RWPE1 (cell line): ENCODE measurements at regions of chr14 and their contacts with region 1.

Region 1: GRCh38 chr14:55910601-55911243 is 207.5 kb upstream of the PELI2 start:
- DNase-seq: no peak
- H3K27ac ChIP-seq: no peak overlapping the region
- CTCF ChIP-seq: no peak

Region 2: GRCh38 chr14:55762595-55763232 is 148.0 kb before region 1 on chr14:
- CTCF ChIA-PET with region 1: no interaction called
- POLR2A ChIA-PET with region 1: no interaction called
- DNase-seq: no peak
- H3K27ac ChIP-seq: no peak overlapping the region
- CTCF ChIP-seq: no peak

Region 3: GRCh38 chr14:56082880-56083279 is 172.2 kb after region 1 on chr14:
- CTCF ChIA-PET with region 1: no interaction called
- POLR2A ChIA-PET with region 1: interaction called, 10 read pairs
- DNase-seq: no peak
- H3K27ac ChIP-seq: no peak overlapping the region
- CTCF ChIP-seq: no peak